Endothelial cell of umbilical vein (primary cell): ENCODE measurements at regions of chr9 and their contacts with region 1.

Region 1: GRCh38 chr9:33415501-33416038 is 13.2 kb upstream of the AQP7 start:
- DNase-seq: peak; percentile 49
- H3K4me3 ChIP-seq: no peak overlapping the region
- H3K27ac ChIP-seq: no peak overlapping the region
- H3K4me1 ChIP-seq: no peaks in the 10 kb centered on the region
- H3K27me3 ChIP-seq: peaks cover 0 to 3% of the 10 kb centered on the region in 2 experiments
- CTCF ChIP-seq: peak; percentile 83 to 84
- POLR2A ChIP-seq: no peak

Region 2: GRCh38 chr9:33404788-33405362 is 10.7 kb before region 1 on chr9:
- CTCF ChIA-PET with region 1: interaction called, 40 read pairs
- POLR2A ChIA-PET with region 1: no interaction called
- dilution Hi-C with region 1: no loop called
- intact Hi-C with region 1: no loop called
- DNase-seq: no peak
- H3K4me3 ChIP-seq: no peak overlapping the region
- H3K27ac ChIP-seq: no peak overlapping the region
- H3K4me1 ChIP-seq: no peaks in the 10 kb centered on the region
- H3K27me3 ChIP-seq: no peaks in the 10 kb centered on the region
- CTCF ChIP-seq: no peak
- POLR2A ChIP-seq: no peak

Region 3: GRCh38 chr9:33430942-33431341 is 15.4 kb after region 1 on chr9:
- CTCF ChIA-PET with region 1: interaction called, 10 read pairs
- POLR2A ChIA-PET with region 1: no interaction called
- dilution Hi-C with region 1: no loop called
- intact Hi-C with region 1: no loop called
- DNase-seq: no peak
- H3K4me3 ChIP-seq: no peak overlapping the region
- H3K27ac ChIP-seq: no peak overlapping the region
- H3K4me1 ChIP-seq: no peaks in the 10 kb centered on the region
- H3K27me3 ChIP-seq: peaks cover 2 to 4% of the 10 kb centered on the region in 2 experiments
- CTCF ChIP-seq: no peak
- POLR2A ChIP-seq: no peak

Region 4: DNA sequence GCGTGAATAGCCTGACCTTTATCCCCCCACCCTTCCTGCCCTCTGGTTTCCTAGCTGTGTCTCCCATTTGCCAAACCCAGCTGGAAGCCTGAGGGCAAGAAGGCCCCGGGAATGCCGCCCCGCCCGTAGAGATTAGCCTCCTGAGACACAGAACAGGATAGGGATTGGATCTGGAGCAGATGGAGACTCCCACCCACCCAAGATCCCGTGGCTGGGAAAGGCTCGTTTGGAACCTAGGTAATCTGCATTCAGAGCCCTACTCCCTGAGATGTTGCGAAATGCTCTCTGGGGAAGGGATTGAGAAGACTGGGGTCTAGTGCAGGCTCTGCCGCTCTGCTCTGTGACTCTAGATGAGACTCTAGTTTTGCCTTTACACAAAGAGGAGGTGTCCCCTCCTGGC is 20.9 kb after region 1 on chr9:
- CTCF ChIA-PET with region 1: interaction called, 10 read pairs
- POLR2A ChIA-PET with region 1: no interaction called
- dilution Hi-C with region 1: no loop called
- intact Hi-C with region 1: no loop called
- DNase-seq: no peak
- H3K4me3 ChIP-seq: no peak overlapping the region
- H3K27ac ChIP-seq: no peak overlapping the region
- H3K4me1 ChIP-seq: peaks cover 3% of the 10 kb centered on the region
- H3K27me3 ChIP-seq: peaks cover 2 to 6% of the 10 kb centered on the region in 2 experiments
- CTCF ChIP-seq: no peak
- POLR2A ChIP-seq: no peak

Region 5: GRCh38 chr9:33446946-33447798 is 31.6 kb after region 1 on chr9 and contains the start of gene AQP3:
- CTCF ChIA-PET with region 1: interaction called, 16 read pairs
- POLR2A ChIA-PET with region 1: no interaction called
- dilution Hi-C with region 1: no loop called
- intact Hi-C with region 1: no loop called
- DNase-seq: peak; percentile 51
- H3K4me3 ChIP-seq: peak within 1 kb of the TSS; percentile 19 to 36 (median 20)
- H3K27ac ChIP-seq: no peak within 1 kb of the TSS
- H3K4me1 ChIP-seq: peaks cover 3% of the 10 kb centered on the region
- H3K27me3 ChIP-seq: peaks cover 0 to 2% of the 10 kb centered on the region in 2 experiments
- CTCF ChIP-seq: peak in 1 of 2 donors; percentile 46
- POLR2A ChIP-seq: no peak
- total RNA-seq, gene AQP3: 0.39 and 0.93 TPM in 2 replicates

Region 6: GRCh38 chr9:33458444-33458843 is 42.9 kb after region 1 on chr9:
- CTCF ChIA-PET with region 1: interaction called, 49 read pairs
- POLR2A ChIA-PET with region 1: no interaction called
- dilution Hi-C with region 1: no loop called
- intact Hi-C with region 1: no loop called
- DNase-seq: peak; percentile 38
- H3K4me3 ChIP-seq: no peak overlapping the region
- H3K27ac ChIP-seq: no peak overlapping the region
- H3K4me1 ChIP-seq: peaks cover 14% of the 10 kb centered on the region
- H3K27me3 ChIP-seq: no peaks in the 10 kb centered on the region
- CTCF ChIP-seq: no peak
- POLR2A ChIP-seq: no peak

Region 7: GRCh38 chr9:33466565-33467495 is 51.3 kb after region 1 on chr9:
- CTCF ChIA-PET with region 1: interaction called, 16 read pairs
- POLR2A ChIA-PET with region 1: no interaction called
- dilution Hi-C with region 1: no loop called
- intact Hi-C with region 1: loop called (anchors 5 kb)
- DNase-seq: peak; percentile 38
- H3K4me3 ChIP-seq: no peak overlapping the region
- H3K27ac ChIP-seq: no peak overlapping the region
- H3K4me1 ChIP-seq: no peaks in the 10 kb centered on the region
- H3K27me3 ChIP-seq: no peaks in the 10 kb centered on the region
- CTCF ChIP-seq: peak; percentile 93 to 98
- POLR2A ChIP-seq: no peak